ENCODE measurements at regions of chr16 and their contacts with region 1.

Region 1: DNA sequence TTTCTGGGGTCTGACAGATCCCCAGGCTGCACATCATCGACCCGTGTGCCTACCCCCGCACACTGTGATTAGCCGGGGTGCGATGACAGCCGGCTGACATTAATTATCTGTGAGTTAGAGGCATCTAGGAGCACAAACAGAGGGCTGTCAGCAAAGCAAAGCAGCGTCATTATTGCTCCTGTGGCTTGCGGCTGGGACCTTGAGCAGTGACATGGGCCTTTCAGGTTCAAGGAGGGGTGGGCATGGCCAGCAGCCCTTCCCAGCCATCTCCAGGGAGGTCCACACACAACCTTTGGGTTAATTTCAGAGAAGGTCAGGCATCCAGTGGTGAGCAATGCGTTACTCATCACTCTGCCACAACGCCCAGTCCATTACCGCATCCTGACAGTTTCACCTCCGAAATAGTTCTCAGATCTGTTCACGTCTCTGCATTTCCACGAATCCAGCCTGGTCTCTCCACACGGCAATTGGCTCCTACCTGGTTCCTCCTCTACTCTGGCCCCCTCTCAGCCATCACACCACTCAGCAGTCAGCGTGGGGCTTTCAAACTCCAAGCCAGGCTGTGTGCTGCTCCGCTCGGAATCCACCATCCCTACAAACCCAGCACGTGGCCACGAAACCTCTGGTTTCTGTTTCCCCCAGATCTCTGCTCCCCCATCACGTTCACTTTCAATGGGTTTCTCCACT is 249.7 kb upstream of the C16orf82 start:
- DNase-seq: no peak

Region 2: DNA sequence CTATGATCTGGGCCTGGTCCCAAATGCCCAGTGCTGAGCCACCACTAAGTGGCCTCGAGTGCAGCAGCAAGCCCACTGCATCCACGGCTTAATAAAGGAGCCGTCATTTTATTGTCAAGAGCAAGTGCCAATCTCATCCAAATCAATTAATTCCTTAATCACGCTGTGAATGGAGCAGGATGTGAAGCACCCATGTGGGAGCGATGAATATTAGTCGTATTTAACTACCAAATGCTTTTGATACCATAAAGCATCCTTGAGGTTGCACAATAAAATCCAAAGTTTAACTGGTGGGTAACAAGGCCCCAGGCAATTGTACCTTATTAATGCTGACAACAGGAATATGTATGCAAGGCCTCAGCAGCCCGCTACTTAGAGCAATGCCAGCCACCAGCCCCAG is 23.7 kb after region 1 on chr16:
- intact Hi-C with region 1: loop called in 1 of 2 experiments (anchors 1 kb)
- DNase-seq: no peak

Measured in posterior vena cava (tissue), 2 donors.